CD8-positive, alpha-beta T cell (primary cell): ENCODE measurements at regions of chr9 and their contacts with region 1.

Region 1: DNA sequence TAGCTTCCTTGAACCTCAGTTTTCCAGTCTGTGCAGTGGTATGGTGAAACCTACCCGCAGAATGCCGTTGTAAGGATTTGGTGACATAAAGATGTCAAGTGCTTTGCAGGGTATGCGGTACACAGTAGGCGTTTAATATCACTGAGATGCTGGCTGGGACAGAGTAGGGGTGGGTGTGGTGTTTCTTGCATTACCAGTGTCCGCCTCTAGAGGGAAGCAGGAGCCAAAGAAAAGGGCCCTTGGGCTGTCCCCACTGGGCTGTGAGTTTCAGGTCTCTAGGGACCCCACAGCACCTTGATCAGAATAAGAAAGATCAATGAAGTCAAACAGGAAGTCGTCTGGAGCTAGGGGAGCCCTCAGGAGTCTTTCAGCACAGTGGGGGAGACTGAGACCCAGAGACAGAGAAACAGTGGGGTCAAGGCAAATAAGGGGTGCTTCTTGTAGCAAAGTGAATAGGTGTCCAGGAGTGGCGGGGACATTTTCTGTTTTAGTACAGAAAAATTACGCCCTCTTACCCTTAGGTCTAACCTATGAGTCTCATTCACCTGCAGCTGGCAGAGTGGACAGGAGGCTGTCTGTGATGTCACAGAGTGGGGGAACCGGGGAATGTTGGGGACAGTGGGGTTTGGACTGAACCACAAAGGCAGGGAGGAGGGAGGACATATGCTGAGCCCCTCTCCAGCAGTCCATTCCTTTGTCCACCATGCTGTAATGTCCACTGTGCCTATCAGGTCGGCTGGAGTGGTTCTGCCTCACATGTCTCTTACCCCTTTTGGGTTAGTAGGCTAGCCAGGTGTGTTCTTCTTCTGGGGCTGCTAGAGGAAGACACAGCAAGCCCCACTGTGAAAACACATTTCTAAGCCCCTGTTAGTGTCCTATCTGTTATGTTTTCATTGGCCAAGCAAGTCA is 4.7 kb upstream of the TEX53 start:
- DNase-seq: peak; percentile 26 to 70 (median 62)
- ATAC-seq: peak; percentile 93
- H3K4me3 ChIP-seq: no peak overlapping the region
- H3K4me3 Mint-ChIP-seq: no peak overlapping the region
- H3K27ac ChIP-seq: no peak overlapping the region
- H3K27ac Mint-ChIP-seq: no peak overlapping the region
- H3K4me1 ChIP-seq: no peaks in the 10 kb centered on the region
- H3K4me1 Mint-ChIP-seq: no peaks in the 10 kb centered on the region
- H3K27me3 ChIP-seq: no peaks in the 10 kb centered on the region
- H3K27me3 Mint-ChIP-seq: peaks cover 2% of the 10 kb centered on the region
- CTCF ChIP-seq: peak; percentile 90

Region 2: DNA sequence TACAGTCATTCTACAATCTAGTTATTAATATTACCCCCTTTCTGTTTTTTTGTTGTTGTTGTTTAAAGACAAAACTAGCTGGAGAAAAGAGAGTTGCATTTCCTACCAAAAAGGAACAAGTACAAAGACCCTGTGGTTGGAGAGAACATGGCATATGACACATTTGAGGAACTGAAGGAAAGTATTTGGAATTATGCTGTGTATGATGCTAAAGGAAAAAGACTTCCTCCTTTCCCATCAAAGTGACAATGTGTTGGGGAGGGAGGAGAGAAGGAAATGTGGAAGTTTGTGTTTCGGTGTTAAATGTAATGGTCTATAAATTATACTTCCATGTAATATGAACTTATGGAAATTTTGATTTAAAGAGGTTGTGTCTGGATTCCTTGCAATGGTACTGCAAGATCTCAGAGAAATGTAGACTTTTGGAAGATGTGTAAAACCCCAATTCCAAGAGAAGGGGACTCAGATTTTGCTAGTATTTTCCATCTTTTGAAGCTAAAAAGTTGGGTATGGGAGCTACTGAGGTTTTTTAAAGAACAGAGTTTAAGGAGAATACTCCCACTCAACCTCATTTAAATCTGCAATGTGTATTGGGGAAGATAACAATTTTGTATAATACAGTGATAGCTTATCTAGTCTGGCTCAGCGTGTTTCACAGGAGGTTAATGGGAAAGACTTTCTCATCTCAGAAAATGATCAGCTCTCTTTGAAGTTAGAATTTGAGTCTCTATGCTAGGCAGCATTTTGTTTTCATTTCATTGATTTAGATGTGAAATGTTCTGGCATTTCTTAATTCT is 283.5 kb after region 1 on chr9:
- CTCF ChIA-PET with region 1: no interaction called
- POLR2A ChIA-PET with region 1: no interaction called
- intact Hi-C with region 1: no loop called
- DNase-seq: no peak
- ATAC-seq: no peak
- H3K4me3 ChIP-seq: no peak overlapping the region
- H3K4me3 Mint-ChIP-seq: no peak overlapping the region
- H3K27ac ChIP-seq: no peak overlapping the region
- H3K27ac Mint-ChIP-seq: no peak overlapping the region
- H3K4me1 ChIP-seq: no peaks in the 10 kb centered on the region
- H3K4me1 Mint-ChIP-seq: peaks cover 2% of the 10 kb centered on the region
- H3K27me3 ChIP-seq: no peaks in the 10 kb centered on the region
- H3K27me3 Mint-ChIP-seq: no peaks in the 10 kb centered on the region
- CTCF ChIP-seq: no peak

Region 3: DNA sequence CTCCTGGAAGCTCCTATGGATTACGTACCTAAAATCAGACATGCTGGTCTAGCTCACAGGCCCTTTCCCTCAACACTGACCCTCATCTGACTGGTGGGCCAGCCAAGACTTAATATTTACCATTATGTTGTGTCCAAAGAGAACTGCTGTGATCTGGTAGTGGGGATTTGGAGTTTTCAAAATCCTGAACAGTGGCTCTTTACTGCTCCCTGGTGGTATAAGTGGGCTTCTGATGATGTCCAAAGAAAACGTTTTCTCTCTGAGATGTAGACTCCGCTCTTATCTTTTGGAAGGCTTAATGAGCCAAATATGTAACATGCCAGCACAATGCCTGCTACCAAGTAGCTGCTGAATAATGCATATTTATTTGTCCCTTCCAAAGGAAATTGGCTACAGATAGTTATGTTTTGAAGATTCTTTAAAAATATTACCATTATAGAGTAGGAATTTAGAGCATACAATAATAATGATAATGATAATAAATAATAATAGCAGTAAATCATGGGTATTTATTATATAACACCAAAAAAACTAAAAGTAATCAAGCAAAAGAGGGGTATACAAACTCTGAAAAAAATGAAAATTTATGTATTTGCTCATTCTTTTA is 862.2 kb after region 1 on chr9:
- CTCF ChIA-PET with region 1: interaction called, 4 read pairs
- POLR2A ChIA-PET with region 1: no interaction called
- intact Hi-C with region 1: loop called (anchors 1 to 2 kb)
- DNase-seq: peak in 2 of 9 experiments; percentile 30 to 39
- ATAC-seq: no peak
- H3K4me3 ChIP-seq: no peak overlapping the region
- H3K4me3 Mint-ChIP-seq: no peak overlapping the region
- H3K27ac ChIP-seq: no peak overlapping the region
- H3K27ac Mint-ChIP-seq: no peak overlapping the region
- H3K4me1 ChIP-seq: no peaks in the 10 kb centered on the region
- H3K4me1 Mint-ChIP-seq: no peaks in the 10 kb centered on the region
- H3K27me3 ChIP-seq: no peaks in the 10 kb centered on the region
- H3K27me3 Mint-ChIP-seq: peaks cover 22% of the 10 kb centered on the region
- CTCF ChIP-seq: peak; percentile 40

Region 4: DNA sequence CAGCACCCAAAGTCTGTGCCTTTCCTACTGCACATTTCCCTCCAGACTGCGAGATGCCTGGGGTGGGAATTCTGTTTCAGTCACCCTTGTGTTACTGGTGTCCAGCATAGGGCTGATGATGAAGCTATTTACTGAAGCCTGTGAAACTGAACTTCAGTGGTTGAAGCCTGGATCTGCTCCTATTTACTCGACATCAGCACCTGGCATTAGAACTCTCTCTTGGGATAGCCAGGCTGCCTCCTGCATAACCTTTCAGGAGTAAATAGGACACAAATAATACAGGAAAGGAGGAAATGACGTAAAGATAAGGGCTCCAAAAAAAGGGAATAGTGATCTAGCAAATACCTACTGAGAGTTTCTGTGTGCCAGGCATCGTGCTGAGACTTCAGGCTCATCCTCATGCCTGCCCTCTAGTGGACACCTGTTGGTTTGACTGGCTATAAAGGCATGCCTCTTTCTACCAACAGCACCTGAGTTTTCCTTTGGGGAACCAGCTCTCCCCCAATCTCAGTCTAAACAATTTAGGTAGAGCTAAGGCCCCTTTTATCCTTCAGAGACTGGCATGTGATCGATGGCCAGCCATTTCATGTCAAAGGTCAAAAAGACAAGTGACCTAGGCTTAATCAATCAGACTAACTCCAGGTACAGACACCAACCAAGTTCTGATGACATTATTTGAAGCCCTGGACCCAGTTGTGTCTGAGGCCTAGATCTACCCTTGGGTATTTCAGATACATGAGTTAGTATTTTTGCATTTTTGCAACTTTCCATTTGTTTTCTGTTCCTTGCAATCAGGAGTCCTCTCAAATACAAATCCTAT is 1832.7 kb after region 1 on chr9:
- CTCF ChIA-PET with region 1: no interaction called
- POLR2A ChIA-PET with region 1: no interaction called
- intact Hi-C with region 1: loop called in 1 of 2 experiments (anchors 5 kb)
- DNase-seq: peak in 4 of 9 experiments; percentile 8 to 26 (median 18)
- ATAC-seq: no peak
- H3K4me3 ChIP-seq: no peak overlapping the region
- H3K4me3 Mint-ChIP-seq: no peak overlapping the region
- H3K27ac ChIP-seq: no peak overlapping the region
- H3K27ac Mint-ChIP-seq: no peak overlapping the region
- H3K4me1 ChIP-seq: no peaks in the 10 kb centered on the region
- H3K4me1 Mint-ChIP-seq: no peaks in the 10 kb centered on the region
- H3K27me3 ChIP-seq: no peaks in the 10 kb centered on the region
- H3K27me3 Mint-ChIP-seq: no peaks in the 10 kb centered on the region
- CTCF ChIP-seq: peak; percentile 58